ENCODE measurements at regions of chr17 and their contacts with region 1.

Region 1: DNA sequence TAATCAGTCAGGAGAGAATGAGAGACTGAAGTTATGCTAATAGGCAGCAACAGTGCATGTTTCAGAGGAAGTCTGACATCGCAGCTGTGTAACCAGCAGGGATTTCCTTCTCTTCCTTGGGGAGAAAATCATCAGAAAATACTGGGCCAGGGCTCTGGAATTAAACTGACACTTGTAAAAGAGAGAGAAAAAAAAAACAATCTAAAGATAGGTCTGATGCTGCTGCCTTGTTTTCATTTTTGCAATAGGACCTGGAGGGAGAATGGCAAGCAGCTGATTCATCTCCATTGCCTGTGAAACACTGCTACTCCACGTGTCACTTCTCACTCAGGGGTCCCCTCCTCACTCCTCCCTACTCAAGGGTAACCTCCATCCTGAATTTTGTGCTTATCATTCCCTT is 17.7 kb upstream of the CORO6 start:
- DNase-seq: no peak
- H3K4me3 Mint-ChIP-seq: no peak overlapping the region
- H3K27ac Mint-ChIP-seq: peak overlapping the region; percentile 49
- H3K4me1 Mint-ChIP-seq: peaks cover 24% of the 10 kb centered on the region
- H3K27me3 Mint-ChIP-seq: no peaks in the 10 kb centered on the region

Region 2: DNA sequence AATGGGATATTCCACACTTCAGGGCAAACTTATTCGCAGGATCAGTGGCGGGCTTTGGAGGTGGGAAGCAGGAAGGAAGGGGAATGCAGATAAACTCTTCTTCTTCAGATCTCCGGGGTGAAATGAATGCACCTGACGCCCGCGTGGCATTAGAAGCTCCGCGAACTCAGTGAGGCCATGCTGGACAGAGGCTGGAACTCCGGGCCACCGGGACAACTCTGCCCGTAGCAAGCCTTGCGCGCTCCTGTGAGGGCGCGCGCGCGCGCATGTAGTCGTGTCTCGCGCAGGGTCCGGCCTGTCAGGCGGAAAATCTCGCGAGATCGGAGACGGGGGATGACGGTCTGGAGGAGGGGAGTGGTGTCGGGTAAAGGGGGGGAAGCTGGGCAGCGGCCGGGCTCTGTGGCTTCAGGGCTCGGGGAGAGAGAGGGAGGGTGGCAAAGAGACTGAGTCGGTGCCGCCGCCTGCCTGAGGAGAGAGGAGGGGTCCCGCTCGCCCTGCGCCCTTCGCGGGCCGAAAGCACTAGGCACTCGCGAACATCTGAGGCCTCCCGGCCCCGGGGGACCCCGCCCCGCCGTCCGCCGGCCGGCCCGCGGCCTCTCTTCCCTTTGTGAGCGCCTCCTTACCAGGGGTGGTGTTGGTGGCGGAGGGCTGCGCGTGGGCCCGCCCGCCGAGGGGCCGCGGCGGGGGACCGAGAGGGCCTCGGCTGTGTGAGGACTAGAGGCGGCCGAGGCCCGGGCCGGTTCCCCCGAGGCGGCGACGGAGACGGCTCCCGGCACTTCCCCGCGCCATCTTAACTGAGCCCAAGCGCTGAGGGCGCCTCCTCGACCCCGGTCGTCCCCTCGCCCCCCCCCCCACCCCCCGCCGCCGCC is 250.2 kb before region 1 on chr17 and contains the start of gene TAOK1:
- CTCF ChIA-PET with region 1: no interaction called
- DNase-seq: peak; percentile 99
- H3K4me3 Mint-ChIP-seq: peak within 1 kb of the TSS; percentile 97
- H3K27ac Mint-ChIP-seq: peak within 1 kb of the TSS; percentile 93
- H3K4me1 Mint-ChIP-seq: peaks cover 40% of the 10 kb centered on the region
- H3K27me3 Mint-ChIP-seq: no peaks in the 10 kb centered on the region

Region 3: GRCh38 chr17:29504711-29505110 is 135.7 kb before region 1 on chr17:
- CTCF ChIA-PET with region 1: no interaction called
- DNase-seq: no peak
- H3K4me3 Mint-ChIP-seq: no peak overlapping the region
- H3K27ac Mint-ChIP-seq: no peak overlapping the region
- H3K4me1 Mint-ChIP-seq: no peaks in the 10 kb centered on the region
- H3K27me3 Mint-ChIP-seq: no peaks in the 10 kb centered on the region

Region 4: GRCh38 chr17:29625037-29625750 is 15.2 kb before region 1 on chr17:
- CTCF ChIA-PET with region 1: interaction called, 10 read pairs
- DNase-seq: no peak
- H3K4me3 Mint-ChIP-seq: no peak overlapping the region
- H3K27ac Mint-ChIP-seq: no peak overlapping the region
- H3K4me1 Mint-ChIP-seq: peaks cover 48% of the 10 kb centered on the region
- H3K27me3 Mint-ChIP-seq: peaks cover 24% of the 10 kb centered on the region

Region 5: DNA sequence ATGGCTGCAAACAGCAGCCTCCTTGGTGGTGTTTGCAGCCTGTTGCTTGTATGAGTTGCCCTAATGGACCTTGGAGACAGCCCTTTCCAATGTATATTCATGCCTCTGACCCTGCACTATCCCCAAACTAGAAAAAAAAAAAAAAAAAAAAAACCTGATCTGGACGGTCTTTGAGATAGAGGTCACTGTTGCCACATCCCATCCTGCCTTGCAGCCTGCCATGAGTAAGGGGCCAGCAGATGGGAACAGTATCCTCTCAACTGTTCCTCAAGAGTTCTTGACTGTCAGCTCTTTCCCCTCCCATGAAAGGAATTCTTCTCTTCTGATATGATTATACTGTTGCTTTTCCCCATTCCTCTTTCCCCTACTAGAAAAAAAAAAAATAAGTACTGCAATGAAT is 137.2 kb after region 1 on chr17:
- CTCF ChIA-PET with region 1: interaction called, 108 read pairs
- DNase-seq: no peak
- H3K4me3 Mint-ChIP-seq: no peak overlapping the region
- H3K27ac Mint-ChIP-seq: no peak overlapping the region
- H3K4me1 Mint-ChIP-seq: peaks cover 11% of the 10 kb centered on the region
- H3K27me3 Mint-ChIP-seq: no peaks in the 10 kb centered on the region

Region 6: GRCh38 chr17:29807520-29808351 is 167.3 kb after region 1 on chr17:
- CTCF ChIA-PET with region 1: interaction called, 33 read pairs
- DNase-seq: peak; percentile 83
- H3K4me3 Mint-ChIP-seq: no peak overlapping the region
- H3K27ac Mint-ChIP-seq: no peak overlapping the region
- H3K4me1 Mint-ChIP-seq: peaks cover 26% of the 10 kb centered on the region
- H3K27me3 Mint-ChIP-seq: no peaks in the 10 kb centered on the region